ENCODE measurements at regions of chr14 and their contacts with region 1.

Region 1: DNA sequence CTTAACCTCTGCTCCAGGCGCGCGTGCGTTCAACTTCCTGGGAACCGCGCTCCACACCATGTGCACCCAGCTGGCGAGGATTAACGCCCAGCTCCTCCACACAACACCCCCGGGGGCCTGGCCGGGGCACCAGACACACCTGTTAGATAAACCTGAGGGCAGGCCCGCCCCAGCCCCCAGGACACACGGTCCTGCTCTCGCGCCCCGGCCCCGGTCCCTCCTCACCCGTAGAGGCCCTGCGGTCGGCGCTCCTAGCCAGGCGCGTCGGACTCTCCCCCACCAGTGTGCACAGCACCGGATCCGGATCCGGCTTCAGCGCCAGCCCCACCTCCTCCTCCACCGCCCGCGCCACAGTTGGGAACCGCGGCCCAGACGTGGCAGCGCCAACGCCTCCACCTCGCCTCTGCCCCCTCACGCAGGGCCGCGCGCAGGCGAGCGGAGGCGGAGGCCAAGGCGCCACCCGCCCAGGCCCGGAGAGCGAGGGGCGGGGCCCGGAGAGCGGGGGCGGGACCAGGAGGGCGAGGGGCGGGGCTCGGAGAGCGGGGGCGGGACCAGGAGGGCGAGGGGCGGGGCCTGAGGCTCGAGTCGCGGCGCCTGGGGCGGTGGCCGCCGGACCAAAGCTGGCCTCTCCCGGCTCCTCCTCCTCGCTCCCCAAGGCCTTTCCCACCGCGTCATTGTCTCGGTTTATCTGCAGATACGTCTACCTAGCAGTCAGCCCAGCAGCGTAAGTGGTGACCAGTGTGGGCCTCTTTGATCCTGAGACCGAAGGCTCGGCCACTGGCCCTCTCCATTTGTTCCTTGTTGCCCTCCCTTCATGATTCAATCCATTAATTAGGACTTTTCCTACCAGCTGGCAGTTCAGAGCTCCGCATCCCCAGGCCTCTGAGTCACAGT is at the start of gene GNPNAT1:
- DNase-seq: peak; percentile 60 to 92 (median 82)

Region 2: GRCh38 chr14:52706724-52707706 is 84.4 kb before region 1 on chr14 and contains the start of gene PSMC6:
- intact Hi-C with region 1: loop called (anchors 10 kb)
- DNase-seq: peak; percentile 89 to 99 (median 96)

Measured in head of caudate nucleus (tissue), 42 donors.